ENCODE measurements at regions of chr4 and their contacts with region 1.

Region 1: GRCh38 chr4:76305971-76306881 is at the start of gene STBD1:
- DNase-seq: peak; percentile 44 to 55 (median 46)
- H3K4me3 ChIP-seq: peak within 1 kb of the TSS; percentile 55 to 93 (median 93)
- H3K4me3 Mint-ChIP-seq: peak within 1 kb of the TSS; percentile 95 to 97
- H3K27ac ChIP-seq: peak within 1 kb of the TSS in 1 of 2 donors; percentile 75
- H3K27ac Mint-ChIP-seq: peak within 1 kb of the TSS; percentile 37 to 84 (median 74)
- H3K4me1 ChIP-seq: peaks cover 47 to 56% of the 10 kb centered on the region in 2 donors
- H3K4me1 Mint-ChIP-seq: peaks cover 46% of the 10 kb centered on the region
- H3K27me3 ChIP-seq: no peaks in the 10 kb centered on the region
- H3K27me3 Mint-ChIP-seq: peaks cover 0 to 1% (median 0%) of the 10 kb centered on the region in 3 donors
- CTCF ChIP-seq: no peak
- polyA plus RNA-seq, gene STBD1: 0.53 to 1.5 (median 1.2) TPM

Region 2: GRCh38 chr4:76238236-76238635 is 68.0 kb before region 1 on chr4:
- intact Hi-C with region 1: no loop called
- DNase-seq: no peak
- H3K4me3 ChIP-seq: no peak overlapping the region
- H3K4me3 Mint-ChIP-seq: no peak overlapping the region
- H3K27ac ChIP-seq: no peak overlapping the region
- H3K27ac Mint-ChIP-seq: no peak overlapping the region
- H3K4me1 ChIP-seq: no peaks in the 10 kb centered on the region
- H3K4me1 Mint-ChIP-seq: peaks cover 4% of the 10 kb centered on the region
- H3K27me3 ChIP-seq: no peaks in the 10 kb centered on the region
- H3K27me3 Mint-ChIP-seq: peaks cover 2 to 6% (median 3%) of the 10 kb centered on the region in 3 donors
- CTCF ChIP-seq: no peak

Region 3: DNA sequence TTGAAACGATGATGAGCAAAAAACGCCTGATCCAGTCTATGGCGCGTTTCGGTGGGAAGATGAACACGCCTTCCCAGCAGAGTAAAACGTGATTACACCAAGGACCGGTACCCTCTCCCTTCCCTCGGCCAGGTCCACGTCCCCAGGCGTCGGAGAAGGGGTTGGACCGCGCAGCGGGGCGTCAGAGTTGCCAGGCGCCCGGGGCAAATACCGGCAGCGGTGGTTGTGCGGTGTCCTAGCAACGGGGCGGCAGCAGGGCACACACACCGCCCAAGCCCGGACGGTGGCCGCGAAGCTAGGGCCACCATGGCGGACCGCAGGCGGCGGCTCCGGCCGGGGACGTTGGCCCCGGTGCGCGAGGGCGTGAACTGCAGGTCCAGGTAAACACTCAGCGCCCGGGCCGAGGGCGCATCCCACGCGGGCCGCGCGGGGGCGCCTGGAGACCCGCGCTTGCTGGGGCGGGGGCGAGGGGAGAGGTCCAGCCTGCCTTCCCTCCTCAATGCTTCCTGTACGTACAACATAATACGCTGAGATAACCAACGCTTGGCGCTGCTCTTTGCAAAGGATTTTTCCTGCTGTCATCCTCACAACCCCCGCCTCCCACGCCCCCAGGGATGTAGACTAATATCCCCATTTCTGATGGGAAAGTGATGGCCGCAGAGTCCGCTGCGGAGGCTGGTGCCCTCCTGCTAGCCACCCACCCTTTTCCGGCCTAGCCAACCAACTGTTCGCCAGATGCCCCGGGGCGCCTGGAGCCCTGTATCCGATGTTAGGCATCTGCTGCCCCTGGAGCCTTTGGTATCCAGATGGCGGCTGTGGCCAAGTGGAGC is 54.6 kb before region 1 on chr4 and contains the start of gene FAM47E:
- intact Hi-C with region 1: loop called in 1 of 2 experiments (anchors 5 kb)
- DNase-seq: peak; percentile 57 to 59 (median 57)
- H3K4me3 ChIP-seq: peak within 1 kb of the TSS; percentile 28 to 76 (median 42)
- H3K4me3 Mint-ChIP-seq: peak within 1 kb of the TSS; percentile 83 to 91
- H3K27ac ChIP-seq: no peak within 1 kb of the TSS
- H3K27ac Mint-ChIP-seq: peak within 1 kb of the TSS in 6 of 7 donors; percentile 26 to 77 (median 50)
- H3K4me1 ChIP-seq: peaks cover 9 to 13% of the 10 kb centered on the region in 2 donors
- H3K4me1 Mint-ChIP-seq: peaks cover 13% of the 10 kb centered on the region
- H3K27me3 ChIP-seq: peaks cover 35 to 62% of the 10 kb centered on the region in 2 donors
- H3K27me3 Mint-ChIP-seq: peaks cover 42 to 68% (median 48%) of the 10 kb centered on the region in 3 donors
- CTCF ChIP-seq: peak; percentile 36
- polyA plus RNA-seq, gene FAM47E: 0.31 TPM in 1 of 3 donors, not detected in the others

Region 4: DNA sequence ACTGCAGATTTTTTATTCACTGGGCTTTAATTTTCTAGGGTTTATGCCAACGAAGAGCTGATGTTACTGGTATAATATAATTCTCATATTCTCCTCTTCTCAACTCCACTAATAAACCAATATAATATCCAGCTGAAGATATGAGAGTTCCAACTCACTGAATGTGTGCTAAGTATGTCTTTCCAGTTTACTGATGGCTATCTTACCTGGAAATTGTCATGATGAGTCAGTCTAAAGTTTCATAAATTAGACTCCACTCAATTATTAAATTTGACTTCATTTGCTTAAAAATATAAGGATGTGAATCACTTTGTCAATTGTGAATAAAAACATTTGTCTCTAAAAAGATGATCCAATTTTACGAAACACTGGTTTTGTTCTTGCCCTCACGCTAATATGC is 28.7 kb after region 1 on chr4:
- intact Hi-C with region 1: no loop called
- DNase-seq: no peak
- H3K4me3 ChIP-seq: no peak overlapping the region
- H3K4me3 Mint-ChIP-seq: no peak overlapping the region
- H3K27ac ChIP-seq: no peak overlapping the region
- H3K27ac Mint-ChIP-seq: no peak overlapping the region
- H3K4me1 ChIP-seq: no peaks in the 10 kb centered on the region
- H3K4me1 Mint-ChIP-seq: no peaks in the 10 kb centered on the region
- H3K27me3 ChIP-seq: no peaks in the 10 kb centered on the region
- H3K27me3 Mint-ChIP-seq: peaks cover 0 to 4% (median 4%) of the 10 kb centered on the region in 3 donors
- CTCF ChIP-seq: no peak

Region 5: DNA sequence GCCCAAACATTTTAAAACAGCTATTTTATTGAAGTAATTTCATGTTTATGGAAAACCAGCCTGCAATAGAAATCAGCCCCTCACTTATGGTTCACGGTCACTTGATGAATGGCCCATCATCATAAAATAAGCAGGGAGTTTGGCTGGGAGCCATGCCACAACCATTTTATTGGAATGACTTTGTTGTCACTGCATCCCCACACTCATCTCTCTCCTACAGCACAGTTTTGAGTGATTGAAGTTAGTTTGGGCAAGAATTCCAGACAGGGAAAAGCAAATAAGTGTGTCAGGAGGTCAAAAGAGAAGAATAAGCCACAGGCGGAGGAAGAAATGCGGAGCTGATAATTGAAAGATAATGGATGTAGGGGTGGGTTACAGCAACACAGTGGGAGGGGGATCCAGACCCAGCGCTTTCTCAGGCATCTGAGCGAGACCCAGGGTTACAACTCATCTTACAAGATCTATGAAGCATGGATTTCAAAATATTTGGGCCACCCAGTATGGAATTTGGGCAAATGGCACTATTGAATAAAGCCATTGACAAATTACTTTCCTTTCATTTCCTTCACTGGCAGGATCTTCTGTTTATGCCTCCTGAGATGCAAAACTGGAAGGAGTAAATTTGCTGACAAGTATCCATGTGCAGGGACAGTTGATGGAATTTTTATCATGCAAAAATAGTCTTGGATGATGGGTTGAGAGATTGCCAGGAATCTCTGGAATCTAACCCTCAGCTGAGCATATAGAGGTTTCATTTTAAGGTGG is 229.6 kb after region 1 on chr4:
- intact Hi-C with region 1: no loop called
- DNase-seq: no peak
- H3K4me3 ChIP-seq: no peak overlapping the region
- H3K4me3 Mint-ChIP-seq: no peak overlapping the region
- H3K27ac ChIP-seq: no peak overlapping the region
- H3K27ac Mint-ChIP-seq: no peak overlapping the region
- H3K4me1 ChIP-seq: no peaks in the 10 kb centered on the region
- H3K4me1 Mint-ChIP-seq: no peaks in the 10 kb centered on the region
- H3K27me3 ChIP-seq: no peaks in the 10 kb centered on the region
- H3K27me3 Mint-ChIP-seq: peaks cover 0 to 2% (median 2%) of the 10 kb centered on the region in 3 donors
- CTCF ChIP-seq: no peak

Region 6: GRCh38 chr4:76626686-76627465 is 320.6 kb after region 1 on chr4:
- intact Hi-C with region 1: no loop called
- DNase-seq: no peak
- H3K4me3 ChIP-seq: no peak overlapping the region
- H3K4me3 Mint-ChIP-seq: no peak overlapping the region
- H3K27ac ChIP-seq: no peak overlapping the region
- H3K27ac Mint-ChIP-seq: no peak overlapping the region
- H3K4me1 ChIP-seq: no peaks in the 10 kb centered on the region
- H3K4me1 Mint-ChIP-seq: no peaks in the 10 kb centered on the region
- H3K27me3 ChIP-seq: no peaks in the 10 kb centered on the region
- H3K27me3 Mint-ChIP-seq: peaks cover 2 to 5% (median 3%) of the 10 kb centered on the region in 3 donors
- CTCF ChIP-seq: no peak

Measured in CD14-positive monocyte (primary cell).